ENCODE measurements at regions of chr11 and their contacts with region 1.

Region 1: GRCh38 chr11:77127232-77127911 is 674 bp upstream of the MYO7A start:
- DNase-seq: peak; percentile 57
- H3K4me3 ChIP-seq: peak overlapping the region in 2 of 3 experiments; percentile 23 to 24
- H3K27ac ChIP-seq: no peak overlapping the region
- H3K4me1 ChIP-seq: peaks cover 10% of the 10 kb centered on the region
- H3K27me3 ChIP-seq: no peaks in the 10 kb centered on the region
- CTCF ChIP-seq: peak; percentile 99 to 100
- POLR2A ChIP-seq: no peak

Region 2: GRCh38 chr11:77091146-77091940 is 36.0 kb before region 1 on chr11:
- CTCF ChIA-PET with region 1: interaction called, 15 read pairs
- POLR2A ChIA-PET with region 1: no interaction called
- dilution Hi-C with region 1: no loop called
- intact Hi-C with region 1: no loop called
- DNase-seq: peak; percentile 73
- H3K4me3 ChIP-seq: no peak overlapping the region
- H3K27ac ChIP-seq: no peak overlapping the region
- H3K4me1 ChIP-seq: no peaks in the 10 kb centered on the region
- H3K27me3 ChIP-seq: no peaks in the 10 kb centered on the region
- CTCF ChIP-seq: peak; percentile 84 to 91
- POLR2A ChIP-seq: no peak

Region 3: DNA sequence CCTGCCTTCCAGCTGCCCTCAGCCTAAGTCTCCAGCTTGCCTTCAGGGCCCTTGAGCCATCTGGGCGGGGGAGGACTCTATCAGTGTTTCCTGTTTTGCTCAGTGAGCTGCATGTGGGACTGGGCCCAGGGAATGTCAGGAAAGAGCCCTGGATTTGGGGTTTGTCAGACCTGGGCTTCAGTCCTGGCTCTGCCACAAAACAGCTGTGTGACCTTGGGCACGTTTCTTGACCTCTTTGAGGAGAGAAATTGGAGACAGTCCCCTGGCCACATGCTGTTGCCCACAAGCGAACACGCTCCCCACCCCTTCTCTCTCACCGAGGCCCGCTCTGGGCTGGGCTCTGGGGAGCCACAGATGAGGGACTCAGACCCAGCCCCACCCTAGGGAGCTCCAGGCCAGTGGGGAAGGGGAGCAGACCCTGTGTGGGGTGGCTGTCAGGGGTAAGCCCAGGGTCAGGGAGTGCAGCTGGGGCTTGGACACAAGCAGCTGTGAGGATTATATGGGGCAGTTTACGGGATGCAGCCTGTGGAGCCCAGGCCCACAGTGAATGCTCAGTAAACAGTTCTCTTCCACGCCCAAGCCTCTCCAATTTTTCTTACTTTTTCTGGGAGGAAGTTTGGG is 13.0 kb after region 1 on chr11:
- CTCF ChIA-PET with region 1: interaction called, 28 read pairs
- POLR2A ChIA-PET with region 1: no interaction called
- dilution Hi-C with region 1: no loop called
- intact Hi-C with region 1: no loop called
- DNase-seq: peak; percentile 82
- H3K4me3 ChIP-seq: no peak overlapping the region
- H3K27ac ChIP-seq: no peak overlapping the region
- H3K4me1 ChIP-seq: peaks cover 8% of the 10 kb centered on the region
- H3K27me3 ChIP-seq: no peaks in the 10 kb centered on the region
- CTCF ChIP-seq: no peak
- POLR2A ChIP-seq: no peak

Region 4: GRCh38 chr11:77175869-77176539 is 48.6 kb after region 1 on chr11:
- CTCF ChIA-PET with region 1: interaction called, 32 read pairs
- POLR2A ChIA-PET with region 1: no interaction called
- dilution Hi-C with region 1: no loop called
- intact Hi-C with region 1: no loop called
- DNase-seq: no peak
- H3K4me3 ChIP-seq: no peak overlapping the region
- H3K27ac ChIP-seq: no peak overlapping the region
- H3K4me1 ChIP-seq: peaks cover 9% of the 10 kb centered on the region
- H3K27me3 ChIP-seq: no peaks in the 10 kb centered on the region
- CTCF ChIP-seq: no peak
- POLR2A ChIP-seq: no peak

Region 5: DNA sequence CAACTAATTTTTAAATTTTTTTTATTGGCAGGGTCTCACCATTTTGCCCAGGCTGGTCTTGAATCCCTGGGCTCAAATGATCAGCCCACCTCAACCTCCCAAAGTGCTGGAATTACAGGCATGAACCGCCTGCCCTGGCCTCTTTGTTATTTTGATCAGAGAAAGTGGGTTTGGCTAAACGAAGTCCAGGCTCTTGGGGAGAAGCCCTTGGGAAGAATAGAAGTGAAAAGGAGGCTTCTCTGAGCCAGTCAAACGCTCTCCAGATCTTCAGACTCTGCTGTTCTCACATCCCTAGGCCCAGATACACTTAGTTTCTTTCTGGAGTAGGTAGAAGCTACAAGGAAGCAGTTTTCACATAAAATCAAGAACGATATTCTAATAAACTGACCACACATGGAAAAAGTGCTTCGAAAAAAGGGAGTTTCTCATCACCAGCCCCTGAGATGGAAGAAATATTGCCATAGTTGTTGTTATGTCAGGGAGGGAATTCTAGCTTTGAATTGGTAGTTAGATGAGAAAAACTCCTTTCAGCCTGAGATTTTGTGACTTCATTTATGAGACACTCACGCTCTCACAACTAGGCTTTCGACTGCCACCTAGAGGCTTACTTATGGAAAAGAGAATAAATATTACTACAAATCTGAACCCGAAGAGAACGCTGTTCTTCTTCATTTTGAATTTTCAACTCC is 420.6 kb after region 1 on chr11:
- CTCF ChIA-PET with region 1: interaction called, 75 read pairs
- POLR2A ChIA-PET with region 1: no interaction called
- dilution Hi-C with region 1: no loop called
- intact Hi-C with region 1: loop called (anchors 1 kb)
- DNase-seq: peak; percentile 58
- H3K4me3 ChIP-seq: no peak overlapping the region
- H3K27ac ChIP-seq: no peak overlapping the region
- H3K4me1 ChIP-seq: no peaks in the 10 kb centered on the region
- H3K27me3 ChIP-seq: no peaks in the 10 kb centered on the region
- CTCF ChIP-seq: peak; percentile 40 to 53
- POLR2A ChIP-seq: no peak

Region 6: GRCh38 chr11:77687085-77687484 is 559.7 kb after region 1 on chr11:
- CTCF ChIA-PET with region 1: no interaction called
- POLR2A ChIA-PET with region 1: no interaction called
- dilution Hi-C with region 1: no loop called
- intact Hi-C with region 1: no loop called
- DNase-seq: no peak
- H3K4me3 ChIP-seq: no peak overlapping the region
- H3K27ac ChIP-seq: no peak overlapping the region
- H3K4me1 ChIP-seq: no peaks in the 10 kb centered on the region
- H3K27me3 ChIP-seq: no peaks in the 10 kb centered on the region
- CTCF ChIP-seq: no peak
- POLR2A ChIP-seq: no peak

Measured in endothelial cell of umbilical vein (primary cell).